Aorta (tissue), 5 donors: ENCODE measurements at regions of chr1 and their contacts with region 1.

Region 1: GRCh38 chr1:5514519-5515183 is 477.6 kb downstream of the NPHP4 start:
- DNase-seq: peak; percentile 70 to 91
- ATAC-seq: peak; percentile 68
- H3K4me3 ChIP-seq: no peak overlapping the region
- H3K27ac ChIP-seq: no peak overlapping the region
- H3K4me1 ChIP-seq: no peaks in the 10 kb centered on the region
- H3K27me3 ChIP-seq: no peaks in the 10 kb centered on the region

Region 2: DNA sequence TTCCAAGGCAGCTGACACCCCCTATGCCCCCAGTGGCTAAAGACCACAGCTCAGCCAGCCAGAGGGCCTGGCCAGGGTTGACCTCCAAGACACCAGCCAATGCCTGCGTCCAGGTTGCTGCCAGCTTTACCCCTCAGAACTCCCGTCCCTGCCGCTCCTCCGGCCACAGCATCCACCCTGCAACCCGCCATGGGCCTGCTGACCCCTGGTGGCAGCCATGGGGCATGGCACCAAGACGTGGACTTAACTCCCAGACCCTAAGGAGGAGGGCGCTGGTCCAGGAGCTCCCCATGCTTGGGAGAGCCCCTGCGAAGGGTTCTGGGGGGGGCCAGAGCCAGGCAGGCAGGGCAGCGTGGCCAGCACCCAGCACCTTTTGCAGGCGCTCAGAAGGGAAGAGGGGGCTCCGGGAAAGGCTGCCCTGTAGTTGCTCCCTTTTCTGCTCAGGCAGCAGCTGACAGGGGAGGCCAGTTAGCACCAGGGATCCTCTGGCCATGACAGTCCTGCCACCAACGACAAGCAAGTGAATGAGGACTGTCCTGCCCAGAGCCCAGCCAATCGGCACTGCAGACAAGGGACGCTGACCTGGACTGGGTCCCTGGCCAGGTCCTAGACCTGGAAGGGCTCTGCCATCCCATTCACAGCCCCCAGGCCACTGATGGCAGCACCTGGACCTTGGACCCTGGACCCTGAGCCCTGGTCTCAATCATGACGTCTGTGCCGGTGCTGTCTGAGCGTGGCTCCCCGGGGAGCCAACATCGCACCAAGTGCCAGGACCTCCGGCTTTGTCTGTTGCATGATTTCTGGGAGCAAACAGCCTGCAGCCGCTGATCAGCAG is 231.3 kb after region 1 on chr1:
- intact Hi-C with region 1: loop called in 1 of 2 experiments (anchors 5 kb)
- DNase-seq: peak; percentile 63 to 85
- ATAC-seq: peak; percentile 73
- H3K4me3 ChIP-seq: no peak overlapping the region
- H3K27ac ChIP-seq: no peak overlapping the region
- H3K4me1 ChIP-seq: no peaks in the 10 kb centered on the region
- H3K27me3 ChIP-seq: no peaks in the 10 kb centered on the region

Region 3: DNA sequence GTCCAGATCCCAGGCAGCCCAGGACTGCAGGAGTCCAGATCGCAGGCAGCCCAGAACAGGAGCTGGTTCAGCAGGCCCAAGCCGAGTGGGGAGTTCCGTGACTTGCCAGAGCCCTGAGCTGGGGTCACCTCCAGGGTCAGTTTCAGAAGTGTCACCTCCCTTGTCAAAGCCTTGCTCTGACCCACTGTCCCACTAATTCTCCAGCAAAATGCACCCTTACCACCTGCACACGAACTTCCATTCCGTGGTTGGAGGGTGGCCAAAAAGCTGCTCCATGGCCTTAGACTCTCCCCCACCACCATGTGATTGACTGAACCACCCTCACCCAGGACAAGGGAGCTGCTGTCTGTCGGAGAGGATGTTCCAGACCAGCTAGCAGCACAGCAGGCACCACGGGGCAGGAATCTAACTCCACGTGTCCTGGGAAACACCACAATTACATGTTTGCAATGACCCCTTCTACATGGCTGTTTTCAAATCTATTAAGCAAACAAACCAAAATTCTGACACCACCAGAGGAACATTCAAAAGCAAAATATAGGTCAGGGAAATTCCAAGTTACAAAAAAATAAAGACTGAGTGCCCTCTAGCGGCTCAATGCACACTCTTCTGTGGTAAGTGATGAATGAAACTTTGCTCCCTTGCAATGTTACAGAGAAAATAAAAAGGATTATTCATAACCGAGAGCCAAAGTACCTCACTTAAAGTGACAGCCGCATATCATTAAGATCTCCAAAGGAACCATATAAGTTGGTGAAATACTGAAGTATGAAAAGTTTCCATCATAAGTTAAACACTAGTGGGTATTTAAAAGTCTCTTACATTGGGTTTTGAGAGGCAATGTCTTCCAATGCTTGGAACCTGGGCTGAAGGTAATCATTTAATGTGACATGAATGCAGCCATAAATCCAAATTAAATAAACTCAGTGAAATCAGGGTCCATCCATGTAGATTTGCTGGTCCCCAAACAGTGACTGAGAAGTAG is 401.2 kb after region 1 on chr1:
- intact Hi-C with region 1: loop called (anchors 10 kb)
- DNase-seq: no peak
- ATAC-seq: peak; percentile 68
- H3K4me3 ChIP-seq: no peak overlapping the region
- H3K27ac ChIP-seq: no peak overlapping the region
- H3K4me1 ChIP-seq: no peaks in the 10 kb centered on the region
- H3K27me3 ChIP-seq: no peaks in the 10 kb centered on the region

Region 4: DNA sequence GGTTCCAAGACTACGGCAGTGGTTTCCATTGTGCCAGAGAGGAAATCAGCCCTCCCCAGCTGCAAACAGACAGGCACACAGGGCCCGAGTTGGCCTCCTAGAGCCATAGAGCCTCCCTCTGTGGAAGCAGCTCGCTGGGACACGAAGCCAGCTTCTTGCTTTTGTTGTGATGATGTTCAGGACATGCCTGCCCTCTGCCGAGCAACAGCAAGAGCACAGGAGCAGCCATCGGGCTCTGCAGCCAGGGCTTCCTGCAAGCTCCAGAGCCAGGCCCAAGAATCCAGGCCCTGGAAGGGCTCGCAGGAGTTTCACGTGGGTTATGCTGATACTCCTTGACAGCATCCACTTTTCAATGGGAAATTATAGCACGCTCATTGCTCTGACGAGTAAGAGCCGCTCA is 459.1 kb after region 1 on chr1:
- intact Hi-C with region 1: loop called in 1 of 2 experiments (anchors 5 kb)
- DNase-seq: peak in 1 of 2 donors; percentile 63
- ATAC-seq: no peak
- H3K4me3 ChIP-seq: no peak overlapping the region
- H3K27ac ChIP-seq: no peak overlapping the region
- H3K4me1 ChIP-seq: no peaks in the 10 kb centered on the region
- H3K27me3 ChIP-seq: no peaks in the 10 kb centered on the region

Region 5: DNA sequence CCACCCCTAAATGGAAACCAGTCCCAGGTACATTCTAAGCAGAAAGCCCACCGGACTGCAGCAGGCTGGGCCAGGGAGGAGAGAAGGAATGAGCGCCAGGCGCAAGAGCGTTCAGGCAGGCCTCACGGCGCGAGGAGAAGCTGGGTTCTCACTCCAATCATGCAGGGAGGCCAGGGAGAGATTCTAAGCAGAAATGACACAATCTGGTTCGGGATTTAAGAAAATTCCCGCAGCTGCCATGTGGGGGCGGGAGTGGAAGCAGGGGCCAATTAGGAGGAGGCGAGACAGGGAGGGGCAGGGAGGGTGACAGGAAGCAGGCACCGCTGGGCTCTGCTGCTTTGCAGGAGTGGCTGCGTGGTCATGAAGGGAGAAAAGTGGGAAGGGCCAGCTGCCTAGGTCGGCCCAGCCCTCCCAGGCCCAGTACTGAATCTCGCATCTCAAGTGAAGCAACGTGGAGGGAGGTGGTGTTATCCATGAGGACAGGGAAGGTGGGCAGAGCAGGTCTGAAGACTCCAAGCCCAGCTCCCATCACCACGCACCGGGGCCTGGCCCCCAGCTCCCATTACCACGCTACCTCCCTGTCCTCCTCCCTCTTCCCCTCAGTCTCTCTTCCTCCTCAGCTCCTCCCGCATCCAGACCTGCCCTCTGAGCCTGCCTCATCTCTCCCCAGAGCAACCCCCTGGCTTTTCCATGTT is 465.8 kb after region 1 on chr1:
- intact Hi-C with region 1: loop called in 1 of 2 experiments (anchors 10 kb)
- DNase-seq: peak in 1 of 2 donors; percentile 77
- ATAC-seq: no peak
- H3K4me3 ChIP-seq: no peak overlapping the region
- H3K27ac ChIP-seq: no peak overlapping the region
- H3K4me1 ChIP-seq: no peaks in the 10 kb centered on the region
- H3K27me3 ChIP-seq: no peaks in the 10 kb centered on the region